ENCODE measurements at regions of chr9 and their contacts with region 1.

Region 1: GRCh38 chr9:34591248-34591916 is 1.9 kb upstream of the CNTFR start:
- DNase-seq: peak; percentile 81 to 91
- H3K4me3 ChIP-seq: peak overlapping the region; percentile 49
- H3K4me3 Mint-ChIP-seq: peak overlapping the region; percentile 81
- H3K27ac Mint-ChIP-seq: no peak overlapping the region
- H3K4me1 ChIP-seq: peaks cover 15% of the 10 kb centered on the region
- H3K4me1 Mint-ChIP-seq: peaks cover 18% of the 10 kb centered on the region
- H3K27me3 ChIP-seq: peaks cover 6% of the 10 kb centered on the region
- H3K27me3 Mint-ChIP-seq: peaks cover 40% of the 10 kb centered on the region
- CTCF ChIP-seq: peak; percentile 86 to 92

Region 2: GRCh38 chr9:34403554-34404380 is 187.6 kb before region 1 on chr9:
- CTCF ChIA-PET with region 1: interaction called, 37 read pairs
- POLR2A ChIA-PET with region 1: no interaction called
- intact Hi-C with region 1: loop called (anchors 1 kb)
- DNase-seq: peak; percentile 78 to 83
- H3K4me3 ChIP-seq: no peak overlapping the region
- H3K4me3 Mint-ChIP-seq: no peak overlapping the region
- H3K27ac Mint-ChIP-seq: no peak overlapping the region
- H3K4me1 ChIP-seq: no peaks in the 10 kb centered on the region
- H3K4me1 Mint-ChIP-seq: no peaks in the 10 kb centered on the region
- H3K27me3 ChIP-seq: no peaks in the 10 kb centered on the region
- H3K27me3 Mint-ChIP-seq: no peaks in the 10 kb centered on the region
- CTCF ChIP-seq: peak; percentile 96

Region 3: DNA sequence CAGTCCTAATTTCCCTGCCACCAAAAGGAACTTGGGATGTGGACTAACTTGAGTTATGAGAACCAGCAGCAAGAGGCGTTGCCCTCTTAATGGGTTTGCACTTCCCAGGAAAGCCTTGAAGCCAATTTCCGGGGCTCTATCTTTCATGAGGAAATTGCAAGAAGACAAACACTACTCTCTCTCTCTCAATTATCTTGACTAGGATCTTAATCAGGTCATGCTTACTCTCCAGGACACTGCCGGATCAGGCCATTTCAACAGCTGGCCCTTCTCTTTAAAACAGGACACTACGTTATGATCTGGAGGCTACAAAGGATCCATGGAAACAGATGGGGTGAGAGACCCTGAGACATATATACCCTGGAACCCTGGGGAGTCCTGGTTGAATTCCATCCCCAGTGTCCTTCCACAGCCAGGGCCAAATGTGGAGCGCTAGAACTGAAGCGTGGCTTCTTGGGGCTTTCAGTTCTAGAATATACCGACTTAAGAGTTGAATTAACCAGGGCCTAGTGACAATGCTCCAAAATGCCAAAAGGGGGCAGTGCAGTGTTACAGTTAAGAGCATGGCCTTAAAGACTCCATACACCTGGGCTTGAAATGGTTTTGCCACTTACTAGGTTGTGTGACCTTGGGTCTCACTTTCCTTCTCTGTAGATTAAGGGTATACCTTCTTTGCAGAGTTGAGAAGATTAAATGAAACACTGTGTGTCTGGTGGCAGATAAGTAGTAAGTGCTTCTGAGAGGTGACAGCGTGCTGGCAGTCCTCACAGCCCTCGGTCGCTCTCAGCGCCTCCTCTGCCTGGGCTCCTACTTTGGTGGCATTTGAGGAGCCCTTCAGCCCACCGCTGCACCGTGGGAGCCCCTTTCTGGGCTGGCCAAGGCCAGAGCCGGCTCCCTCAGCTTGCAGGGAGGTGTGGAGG is 154.1 kb before region 1 on chr9:
- CTCF ChIA-PET with region 1: interaction called, 3 read pairs
- POLR2A ChIA-PET with region 1: no interaction called
- intact Hi-C with region 1: loop called (anchors 1 kb)
- DNase-seq: peak; percentile 54 to 65
- H3K4me3 ChIP-seq: no peak overlapping the region
- H3K4me3 Mint-ChIP-seq: no peak overlapping the region
- H3K27ac Mint-ChIP-seq: no peak overlapping the region
- H3K4me1 ChIP-seq: no peaks in the 10 kb centered on the region
- H3K4me1 Mint-ChIP-seq: no peaks in the 10 kb centered on the region
- H3K27me3 ChIP-seq: no peaks in the 10 kb centered on the region
- H3K27me3 Mint-ChIP-seq: no peaks in the 10 kb centered on the region
- CTCF ChIP-seq: peak; percentile 67 to 69

Region 4: DNA sequence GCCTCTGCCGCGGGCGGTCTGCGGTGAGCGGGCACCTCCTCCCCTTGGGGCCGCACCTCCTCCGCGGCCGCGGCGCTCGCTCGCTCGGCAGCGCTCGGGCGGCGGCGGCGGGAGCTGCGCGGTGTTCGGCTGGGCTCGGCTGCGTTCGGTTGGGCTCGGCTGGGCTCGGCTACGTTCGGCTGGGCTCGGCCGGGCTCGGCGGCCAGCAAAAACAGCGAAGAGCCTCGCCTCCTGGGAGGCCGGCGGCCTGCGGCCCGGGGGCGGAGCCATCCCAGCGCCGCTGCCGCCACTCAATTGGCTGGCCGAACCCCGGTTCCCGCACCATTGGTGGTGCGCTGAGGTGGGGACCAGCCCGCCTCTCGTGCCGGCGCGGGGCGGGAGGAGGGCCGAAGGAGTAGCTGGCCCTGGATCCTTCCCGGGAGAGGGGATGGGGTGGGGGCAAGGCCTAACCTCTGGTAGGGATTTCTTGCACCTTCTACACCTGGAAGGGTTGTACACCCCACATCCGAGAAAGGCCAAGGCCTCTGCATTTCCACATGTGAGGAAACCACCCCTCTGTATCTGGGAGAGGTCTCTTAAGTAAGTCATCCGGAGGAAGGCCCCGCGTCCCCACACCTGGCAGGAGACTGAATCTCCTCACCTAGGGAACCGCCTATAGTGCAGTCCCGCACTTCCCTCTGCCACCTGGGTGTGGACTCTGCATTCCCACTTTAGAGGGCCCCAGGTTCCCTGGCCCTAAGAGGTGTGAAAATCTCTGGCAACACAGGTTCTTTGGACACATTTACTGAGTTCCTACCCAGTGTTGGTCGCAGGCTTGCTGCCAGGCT is 68.2 kb before region 1 on chr9 and contains the start of gene ENHO:
- CTCF ChIA-PET with region 1: interaction called, 6 read pairs
- POLR2A ChIA-PET with region 1: no interaction called
- intact Hi-C with region 1: loop called (anchors 2 kb)
- DNase-seq: peak; percentile 88 to 95
- H3K4me3 ChIP-seq: peak within 1 kb of the TSS; percentile 44
- H3K4me3 Mint-ChIP-seq: peak within 1 kb of the TSS; percentile 74
- H3K27ac Mint-ChIP-seq: no peak within 1 kb of the TSS
- H3K4me1 ChIP-seq: peaks cover 3% of the 10 kb centered on the region; the same call in 1 of the 2 replicates
- H3K4me1 Mint-ChIP-seq: peaks cover 7% of the 10 kb centered on the region
- H3K27me3 ChIP-seq: no peaks in the 10 kb centered on the region
- H3K27me3 Mint-ChIP-seq: peaks cover 14% of the 10 kb centered on the region
- CTCF ChIP-seq: no peak
- total RNA-seq, gene ENHO: 1.00 and 2.1 TPM in 2 replicates

Region 5: DNA sequence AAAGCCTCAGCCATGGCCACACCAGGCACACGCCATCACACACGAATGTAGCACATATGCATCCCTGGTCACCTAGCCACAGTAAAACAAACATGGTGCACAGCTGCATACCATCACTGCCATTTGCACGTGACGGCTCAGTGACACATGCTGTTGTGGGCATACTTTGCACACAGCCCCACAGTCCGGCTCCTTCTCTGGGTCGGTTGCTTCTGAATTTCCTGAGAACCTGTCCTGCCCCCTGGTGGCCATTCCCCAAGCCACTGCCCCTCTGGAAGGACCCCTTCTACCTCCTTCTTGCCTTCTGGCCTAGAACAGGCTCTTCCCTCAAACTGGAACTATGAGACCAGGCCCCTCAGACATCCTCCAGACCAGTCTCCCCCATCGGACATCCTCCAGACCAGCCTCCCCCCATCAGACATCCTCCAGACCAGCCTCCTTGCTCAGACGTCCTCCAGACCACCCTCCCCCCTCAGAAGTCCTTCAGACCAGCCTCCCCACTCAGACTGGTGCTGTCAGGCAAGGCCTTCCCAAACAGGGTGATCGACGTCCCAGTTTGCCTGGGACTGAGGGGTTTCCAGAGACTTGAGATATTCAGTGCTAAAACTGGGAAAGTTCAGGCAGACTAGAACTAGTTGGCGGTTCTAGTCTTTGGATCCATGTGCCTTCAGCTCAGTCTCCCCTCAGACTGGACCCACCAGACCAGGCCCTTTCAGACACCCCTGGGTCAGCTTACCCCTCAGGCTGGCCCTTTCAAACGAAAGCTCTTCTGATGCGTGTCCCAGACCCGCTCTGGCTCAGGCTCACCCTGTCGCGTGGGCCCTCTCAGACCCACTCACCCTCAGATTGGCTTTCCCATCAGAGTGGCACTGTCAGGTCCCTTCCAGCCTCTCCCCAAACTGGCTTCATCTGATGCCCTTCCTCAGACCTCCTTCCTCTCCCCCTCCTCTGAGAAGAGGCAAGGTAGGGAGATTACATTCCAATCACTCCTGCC is 44.3 kb before region 1 on chr9:
- CTCF ChIA-PET with region 1: interaction called, 34 read pairs
- POLR2A ChIA-PET with region 1: no interaction called
- intact Hi-C with region 1: loop called (anchors 1 kb)
- DNase-seq: peak; percentile 61 to 67
- H3K4me3 ChIP-seq: no peak overlapping the region
- H3K4me3 Mint-ChIP-seq: no peak overlapping the region
- H3K27ac Mint-ChIP-seq: no peak overlapping the region
- H3K4me1 ChIP-seq: no peaks in the 10 kb centered on the region
- H3K4me1 Mint-ChIP-seq: no peaks in the 10 kb centered on the region
- H3K27me3 ChIP-seq: no peaks in the 10 kb centered on the region
- H3K27me3 Mint-ChIP-seq: peaks cover 13% of the 10 kb centered on the region
- CTCF ChIP-seq: peak; percentile 58 to 60

Region 6: GRCh38 chr9:34651876-34652601 is 60.7 kb after region 1 on chr9 and contains the start of gene IL11RA:
- CTCF ChIA-PET with region 1: no interaction called
- POLR2A ChIA-PET with region 1: no interaction called
- intact Hi-C with region 1: no loop called
- DNase-seq: peak; percentile 97 to 98
- H3K4me3 ChIP-seq: peak within 1 kb of the TSS; percentile 31
- H3K4me3 Mint-ChIP-seq: peak within 1 kb of the TSS; percentile 66
- H3K27ac Mint-ChIP-seq: peak within 1 kb of the TSS; percentile 62
- H3K4me1 ChIP-seq: peaks cover 30% of the 10 kb centered on the region
- H3K4me1 Mint-ChIP-seq: peaks cover 30% of the 10 kb centered on the region
- H3K27me3 ChIP-seq: no peaks in the 10 kb centered on the region
- H3K27me3 Mint-ChIP-seq: no peaks in the 10 kb centered on the region
- CTCF ChIP-seq: peak in 1 of 2 experiments; percentile 20
- total RNA-seq, gene IL11RA: 5.6 and 7.1 TPM in 2 replicates

Region 7: GRCh38 chr9:34744295-34745221 is 153.2 kb after region 1 on chr9:
- CTCF ChIA-PET with region 1: no interaction called
- POLR2A ChIA-PET with region 1: no interaction called
- intact Hi-C with region 1: no loop called
- DNase-seq: no peak
- H3K4me3 ChIP-seq: no peak overlapping the region
- H3K4me3 Mint-ChIP-seq: no peak overlapping the region
- H3K27ac Mint-ChIP-seq: no peak overlapping the region
- H3K4me1 ChIP-seq: no peaks in the 10 kb centered on the region
- H3K4me1 Mint-ChIP-seq: no peaks in the 10 kb centered on the region
- H3K27me3 ChIP-seq: no peaks in the 10 kb centered on the region
- H3K27me3 Mint-ChIP-seq: no peaks in the 10 kb centered on the region
- CTCF ChIP-seq: no peak

Region 8: GRCh38 chr9:34896112-34896511 is 304.7 kb after region 1 on chr9:
- CTCF ChIA-PET with region 1: no interaction called
- POLR2A ChIA-PET with region 1: no interaction called
- intact Hi-C with region 1: no loop called
- DNase-seq: no peak
- H3K4me3 ChIP-seq: no peak overlapping the region
- H3K4me3 Mint-ChIP-seq: no peak overlapping the region
- H3K27ac Mint-ChIP-seq: no peak overlapping the region
- H3K4me1 ChIP-seq: no peaks in the 10 kb centered on the region
- H3K4me1 Mint-ChIP-seq: no peaks in the 10 kb centered on the region
- H3K27me3 ChIP-seq: no peaks in the 10 kb centered on the region; the same call in none of the 2 replicates
- H3K27me3 Mint-ChIP-seq: peaks cover 20% of the 10 kb centered on the region
- CTCF ChIP-seq: peak in 1 of 2 experiments; percentile 14